HEK293 (cell line): ENCODE measurements at regions of chr5 and their contacts with region 1.

Region 1: GRCh38 chr5:43120720-43121564 is at the start of gene ZNF131:
- H3K4me3 ChIP-seq: peak within 1 kb of the TSS; percentile 86
- H3K27ac ChIP-seq: peak within 1 kb of the TSS; percentile 92
- H3K4me1 ChIP-seq: peaks cover 11% of the 10 kb centered on the region; the same call in 1 of the 2 replicates
- CTCF ChIP-seq: no peak; the same call in 1 of the 2 replicates

Region 2: DNA sequence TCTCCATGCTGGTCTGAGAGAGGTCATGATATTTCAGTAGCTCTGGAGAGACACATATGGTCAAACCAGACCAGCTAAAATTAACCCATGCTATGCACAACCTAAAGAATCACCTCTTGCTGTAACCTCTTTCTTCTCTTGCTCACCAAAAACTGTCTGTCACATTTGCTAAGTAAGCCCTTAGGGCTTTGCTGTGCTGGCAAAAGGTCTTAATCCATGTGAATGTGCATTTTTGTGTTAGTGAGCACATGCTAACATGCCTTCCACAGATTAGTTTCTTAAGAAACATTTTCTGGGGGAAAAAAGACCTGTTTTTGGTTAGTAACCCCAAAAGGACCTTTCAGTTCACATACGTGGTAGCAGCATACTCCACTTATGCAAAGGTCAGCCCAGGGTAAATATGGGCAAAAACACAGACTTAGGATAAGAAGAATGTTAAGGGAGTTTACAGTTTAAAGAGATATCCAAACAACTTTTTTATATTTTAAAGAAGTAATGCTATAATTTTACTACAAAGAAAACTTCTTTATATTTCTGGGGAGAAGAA is 488.5 kb before region 1 on chr5:
- CTCF ChIA-PET with region 1: no interaction called
- POLR2A ChIA-PET with region 1: no interaction called
- H3K4me3 ChIP-seq: no peak overlapping the region
- H3K27ac ChIP-seq: no peak overlapping the region
- H3K4me1 ChIP-seq: peaks cover 8% of the 10 kb centered on the region
- CTCF ChIP-seq: no peak

Region 3: DNA sequence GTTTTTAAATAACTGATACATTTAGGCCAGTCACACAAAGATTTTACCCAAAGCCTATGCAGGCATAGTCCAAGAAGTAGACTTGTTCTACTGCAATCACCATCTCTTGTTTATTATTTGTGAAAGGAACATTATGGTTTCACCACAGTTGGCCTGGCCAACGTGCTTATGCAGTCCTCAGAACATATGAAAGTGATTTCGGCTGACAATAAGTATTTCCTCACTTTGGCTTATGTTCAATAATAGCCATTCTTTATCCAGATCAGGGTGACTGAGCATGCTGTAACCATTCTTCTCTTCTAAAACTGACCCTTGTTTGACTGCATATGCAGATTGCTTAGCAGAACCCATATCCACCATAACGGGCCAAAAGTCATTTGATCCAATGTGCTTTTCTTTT is 440.9 kb before region 1 on chr5:
- CTCF ChIA-PET with region 1: no interaction called
- POLR2A ChIA-PET with region 1: no interaction called
- H3K4me3 ChIP-seq: no peak overlapping the region
- H3K27ac ChIP-seq: no peak overlapping the region
- H3K4me1 ChIP-seq: no peaks in the 10 kb centered on the region
- CTCF ChIP-seq: no peak

Region 4: DNA sequence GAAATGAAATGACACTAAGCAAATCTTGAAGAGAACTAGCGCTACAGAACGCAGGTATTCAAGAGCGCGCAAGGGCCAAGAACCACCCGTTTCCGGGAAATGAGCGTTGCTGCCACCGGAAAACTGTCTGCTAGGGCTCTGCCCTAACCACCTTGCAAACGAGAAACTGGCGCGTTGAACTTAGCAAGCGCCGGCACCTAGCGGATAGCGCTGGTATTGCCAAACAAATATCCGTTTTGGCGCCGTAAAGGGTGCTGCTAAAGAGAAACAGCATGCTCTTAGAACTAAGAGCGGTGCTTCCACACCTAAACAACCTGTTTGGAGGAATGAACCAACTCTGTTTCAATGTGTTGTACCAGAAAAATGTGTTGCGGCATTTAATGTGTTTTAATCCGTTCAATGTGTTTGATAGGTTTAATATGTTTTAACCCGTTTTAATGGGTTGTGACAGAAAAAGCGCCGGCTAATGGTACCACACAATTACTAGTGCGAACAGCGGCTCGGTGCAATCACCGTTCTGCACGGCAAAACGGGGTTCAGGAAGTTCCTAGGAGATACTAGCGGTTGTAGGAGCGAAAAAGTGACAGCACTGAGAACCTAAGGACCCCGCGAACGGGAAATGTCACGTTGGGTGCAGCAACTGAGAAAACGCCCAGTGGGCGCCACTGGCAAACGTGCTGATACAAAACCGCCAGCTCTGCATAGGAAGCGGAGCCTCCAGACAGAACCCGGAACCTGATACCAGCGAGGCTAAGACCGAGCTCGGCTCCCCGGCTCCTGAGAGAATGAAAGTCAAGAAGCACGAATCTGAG is 80.4 kb before region 1 on chr5 and contains the start of gene ANXA2R:
- CTCF ChIA-PET with region 1: no interaction called
- POLR2A ChIA-PET with region 1: interaction called, 14 read pairs
- H3K4me3 ChIP-seq: peak within 1 kb of the TSS; percentile 56
- H3K27ac ChIP-seq: peak within 1 kb of the TSS; percentile 84
- H3K4me1 ChIP-seq: no peaks in the 10 kb centered on the region
- CTCF ChIP-seq: peak; percentile 79

Region 5: DNA sequence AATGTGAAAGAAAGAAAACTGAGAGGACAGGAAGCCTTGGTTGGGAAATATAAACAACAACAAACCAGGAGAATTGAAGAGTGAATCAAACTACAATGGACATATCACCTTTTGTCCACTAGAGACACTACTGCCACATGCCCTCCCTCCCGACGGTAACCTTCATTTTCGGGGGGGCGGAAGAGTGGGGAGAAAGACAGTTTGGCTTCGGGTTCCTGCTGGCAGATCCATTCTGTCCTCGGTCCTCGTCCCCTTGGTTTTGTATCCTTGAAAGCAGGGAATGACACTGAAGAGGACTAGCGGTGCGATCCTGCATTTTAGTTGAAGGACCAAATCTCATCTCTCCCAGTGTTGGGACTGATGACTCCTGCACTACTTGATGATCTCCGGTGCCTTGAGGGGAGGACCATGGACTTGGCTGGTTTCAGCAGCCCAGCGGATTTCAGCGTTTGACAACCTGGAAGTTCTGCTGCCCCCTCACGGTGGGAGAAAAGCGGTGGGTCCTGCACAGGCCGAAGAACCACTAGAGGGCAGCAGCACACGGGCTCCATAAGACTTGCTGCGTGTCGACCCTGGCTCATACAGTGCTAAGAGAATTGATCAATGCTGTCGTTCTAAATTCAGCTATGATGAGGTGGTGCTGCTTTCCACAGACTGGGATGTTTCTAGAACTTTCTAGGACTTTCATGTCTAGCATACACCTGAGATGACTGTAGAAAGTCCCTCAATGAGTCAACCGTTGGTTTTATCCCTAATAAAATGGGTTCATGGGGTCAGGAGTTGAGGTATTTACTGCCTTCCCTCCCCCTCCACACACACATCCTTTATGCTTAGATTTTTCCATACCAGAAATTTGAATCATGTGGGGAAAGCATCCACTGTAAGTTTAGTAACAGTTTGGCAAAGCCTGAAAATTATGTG is 15.3 kb before region 1 on chr5:
- CTCF ChIA-PET with region 1: interaction called, 141 read pairs
- POLR2A ChIA-PET with region 1: interaction called, 19 read pairs
- H3K4me3 ChIP-seq: peak overlapping the region; percentile 44
- H3K27ac ChIP-seq: no peak overlapping the region
- H3K4me1 ChIP-seq: no peaks in the 10 kb centered on the region
- CTCF ChIP-seq: peak; percentile 100

Region 6: DNA sequence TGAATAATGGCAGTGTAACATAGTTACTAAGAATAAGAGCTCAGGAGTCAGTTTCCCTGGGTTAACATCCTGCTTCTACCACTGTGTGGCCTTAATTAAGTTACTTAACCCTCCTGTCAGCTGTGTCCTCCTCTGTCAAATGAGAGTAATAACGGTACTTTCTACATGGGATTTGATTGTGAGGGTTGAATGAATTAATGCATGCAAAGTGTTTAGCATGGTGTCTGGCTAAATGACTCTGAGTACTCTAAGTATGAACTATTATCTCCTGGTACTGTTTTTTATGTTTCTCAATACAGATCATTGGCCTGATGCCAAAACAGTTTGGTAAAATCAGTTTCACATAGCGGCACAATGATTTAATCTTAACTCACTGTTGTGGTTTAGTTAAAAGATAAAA is 19.3 kb after region 1 on chr5:
- CTCF ChIA-PET with region 1: interaction called, 4 read pairs
- POLR2A ChIA-PET with region 1: interaction called, 16 read pairs
- H3K4me3 ChIP-seq: no peak overlapping the region
- H3K27ac ChIP-seq: no peak overlapping the region
- H3K4me1 ChIP-seq: no peaks in the 10 kb centered on the region
- CTCF ChIP-seq: no peak

Region 7: GRCh38 chr5:43313035-43313853 is 192.3 kb after region 1 on chr5 and contains the start of gene HMGCS1:
- CTCF ChIA-PET with region 1: interaction called, 4 read pairs
- POLR2A ChIA-PET with region 1: interaction called, 52 read pairs
- H3K4me3 ChIP-seq: peak within 1 kb of the TSS; percentile 90
- H3K27ac ChIP-seq: peak within 1 kb of the TSS; percentile 83
- H3K4me1 ChIP-seq: peaks cover 19% of the 10 kb centered on the region
- CTCF ChIP-seq: peak; percentile 97